ENCODE measurements at regions of chr3 and their contacts with region 1.

Region 1: GRCh38 chr3:59559721-59560435 is 510.1 kb upstream of the CFAP20DC start:
- DNase-seq: peak; percentile 67
- ATAC-seq: peak; percentile 92
- H3K4me3 Mint-ChIP-seq: no peak overlapping the region
- H3K27ac Mint-ChIP-seq: peak overlapping the region; percentile 93
- H3K4me1 Mint-ChIP-seq: peaks cover 37% of the 10 kb centered on the region
- H3K27me3 Mint-ChIP-seq: no peaks in the 10 kb centered on the region

Region 2: GRCh38 chr3:59049671-59050331 is 510.1 kb before region 1 on chr3 and contains the start of gene CFAP20DC:
- CTCF ChIA-PET with region 1: no interaction called
- POLR2A ChIA-PET with region 1: no interaction called
- intact Hi-C with region 1: loop called in 1 of 2 experiments (anchors 5 kb)
- DNase-seq: peak; percentile 97
- ATAC-seq: peak; percentile 99
- H3K4me3 Mint-ChIP-seq: peak within 1 kb of the TSS; percentile 66
- H3K27ac Mint-ChIP-seq: peak within 1 kb of the TSS; percentile 65
- H3K4me1 Mint-ChIP-seq: peaks cover 9% of the 10 kb centered on the region
- H3K27me3 Mint-ChIP-seq: peaks cover 2% of the 10 kb centered on the region
- total RNA-seq, gene CFAP20DC: 2.7 to 3.5 TPM

Region 3: GRCh38 chr3:59235634-59236012 is 324.3 kb before region 1 on chr3:
- CTCF ChIA-PET with region 1: interaction called, 3 read pairs
- POLR2A ChIA-PET with region 1: no interaction called
- intact Hi-C with region 1: loop called in 1 of 2 experiments (anchors 10 kb)
- DNase-seq: peak; percentile 65
- ATAC-seq: peak; percentile 91
- H3K4me3 Mint-ChIP-seq: no peak overlapping the region
- H3K27ac Mint-ChIP-seq: no peak overlapping the region
- H3K4me1 Mint-ChIP-seq: peaks cover 14% of the 10 kb centered on the region
- H3K27me3 Mint-ChIP-seq: peaks cover 7% of the 10 kb centered on the region

Region 4: GRCh38 chr3:59450946-59451763 is 108.7 kb before region 1 on chr3:
- CTCF ChIA-PET with region 1: no interaction called
- POLR2A ChIA-PET with region 1: interaction called, 4 read pairs
- intact Hi-C with region 1: loop called (anchors 1 kb)
- DNase-seq: peak; percentile 72
- ATAC-seq: peak; percentile 92
- H3K4me3 Mint-ChIP-seq: peak overlapping the region; percentile 50
- H3K27ac Mint-ChIP-seq: peak overlapping the region; percentile 96
- H3K4me1 Mint-ChIP-seq: peaks cover 73% of the 10 kb centered on the region
- H3K27me3 Mint-ChIP-seq: no peaks in the 10 kb centered on the region

Region 5: DNA sequence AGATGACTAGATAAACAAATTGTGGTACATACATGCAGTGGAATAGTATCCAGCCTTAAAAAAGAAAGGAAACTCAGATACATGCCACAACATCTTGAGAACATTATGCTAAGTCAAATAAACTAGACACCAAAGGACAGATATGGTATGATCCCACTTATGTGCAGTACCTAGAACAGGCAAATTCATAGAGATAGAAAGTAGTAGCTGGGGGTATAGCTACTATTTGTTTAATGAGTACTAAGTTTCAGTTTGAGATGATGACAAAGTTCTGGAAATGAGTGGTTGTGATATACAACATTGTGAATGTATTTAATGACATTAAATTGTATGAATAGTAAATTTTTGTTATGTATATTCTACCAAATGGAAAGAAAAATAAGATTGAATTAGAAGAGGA is 32.9 kb before region 1 on chr3:
- CTCF ChIA-PET with region 1: no interaction called
- POLR2A ChIA-PET with region 1: interaction called, 3 read pairs
- intact Hi-C with region 1: loop called (anchors 1 kb)
- DNase-seq: no peak
- ATAC-seq: peak; percentile 98
- H3K4me3 Mint-ChIP-seq: no peak overlapping the region
- H3K27ac Mint-ChIP-seq: peak overlapping the region; percentile 55
- H3K4me1 Mint-ChIP-seq: peaks cover 18% of the 10 kb centered on the region
- H3K27me3 Mint-ChIP-seq: peaks cover 3% of the 10 kb centered on the region

Region 6: GRCh38 chr3:60017631-60018030 is 457.8 kb after region 1 on chr3:
- CTCF ChIA-PET with region 1: no interaction called
- POLR2A ChIA-PET with region 1: no interaction called
- intact Hi-C with region 1: loop called in 1 of 2 experiments (anchors 1 kb)
- DNase-seq: peak; percentile 77
- ATAC-seq: peak; percentile 88
- H3K4me3 Mint-ChIP-seq: peak overlapping the region; percentile 38
- H3K27ac Mint-ChIP-seq: peak overlapping the region; percentile 95
- H3K4me1 Mint-ChIP-seq: peaks cover 77% of the 10 kb centered on the region
- H3K27me3 Mint-ChIP-seq: no peaks in the 10 kb centered on the region